H1 (cell line): ENCODE measurements at regions of chr17 and their contacts with region 1.

Region 1: GRCh38 chr17:51000835-51001638 is 119.6 kb downstream of the SPAG9 start:
- DNase-seq: no peak
- H3K4me3 ChIP-seq: no peak overlapping the region
- H3K27ac ChIP-seq: no peak overlapping the region
- H3K4me1 ChIP-seq: no peaks in the 10 kb centered on the region
- H3K27me3 ChIP-seq: no peaks in the 10 kb centered on the region
- CTCF ChIP-seq: peak in 2 of 3 experiments; percentile 39 to 48; a peak in 2 of 4 replicates
- EP300 ChIP-seq: no peak
- POLR2A ChIP-seq: no peak
- RAD21 ChIP-seq: peak; percentile 75 to 78

Region 2: DNA sequence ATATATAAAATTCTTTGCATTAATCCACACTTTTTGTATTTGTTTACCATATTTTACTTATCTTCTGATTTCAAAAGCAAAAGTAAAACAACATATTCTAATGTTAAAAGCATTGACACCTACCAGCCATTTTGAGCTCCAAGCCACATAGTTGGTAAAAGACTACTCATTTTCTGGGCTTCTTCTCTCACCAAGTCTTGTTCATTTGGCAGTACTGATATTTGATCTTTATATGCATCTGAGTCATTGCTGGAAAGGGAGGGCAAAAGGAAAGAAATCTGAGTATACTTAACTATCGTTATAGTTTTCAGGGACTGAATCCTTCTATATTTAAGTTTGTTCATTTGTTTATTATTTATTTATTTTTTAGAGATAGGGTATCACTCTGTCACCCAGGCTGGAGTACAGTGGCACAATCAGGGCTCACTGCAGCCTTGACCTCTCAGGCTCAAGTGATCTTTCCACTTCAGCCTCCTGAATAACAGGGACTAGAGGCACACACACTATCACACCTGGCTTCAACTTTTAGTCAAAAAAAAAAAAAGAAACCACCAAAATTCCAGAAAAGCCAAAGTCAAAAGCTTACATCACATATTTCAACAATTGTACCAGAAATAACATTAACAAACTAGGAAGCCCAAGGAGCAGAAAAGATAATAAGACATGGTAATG is 13.9 kb before region 1 on chr17:
- CTCF ChIA-PET with region 1: interaction called, 16 read pairs
- POLR2A ChIA-PET with region 1: no interaction called
- DNase-seq: no peak
- H3K4me3 ChIP-seq: no peak overlapping the region
- H3K27ac ChIP-seq: no peak overlapping the region
- H3K4me1 ChIP-seq: no peaks in the 10 kb centered on the region
- H3K27me3 ChIP-seq: no peaks in the 10 kb centered on the region
- CTCF ChIP-seq: no peak
- EP300 ChIP-seq: no peak
- POLR2A ChIP-seq: no peak
- RAD21 ChIP-seq: no peak

Region 3: GRCh38 chr17:51015145-51015558 is 14.1 kb after region 1 on chr17:
- CTCF ChIA-PET with region 1: interaction called, 23 read pairs
- POLR2A ChIA-PET with region 1: interaction called, 5 read pairs
- DNase-seq: no peak
- H3K4me3 ChIP-seq: no peak overlapping the region
- H3K27ac ChIP-seq: no peak overlapping the region
- H3K4me1 ChIP-seq: no peaks in the 10 kb centered on the region
- H3K27me3 ChIP-seq: no peaks in the 10 kb centered on the region
- CTCF ChIP-seq: no peak
- EP300 ChIP-seq: no peak
- POLR2A ChIP-seq: no peak
- RAD21 ChIP-seq: no peak

Region 4: GRCh38 chr17:51046514-51047384 is 45.7 kb after region 1 on chr17:
- CTCF ChIA-PET with region 1: interaction called, 147 read pairs
- POLR2A ChIA-PET with region 1: interaction called, 5 read pairs
- DNase-seq: peak; percentile 53 to 75
- H3K4me3 ChIP-seq: peak overlapping the region; percentile 32 to 61 (median 38); a peak in 7 of 8 replicates
- H3K27ac ChIP-seq: peak overlapping the region; percentile 84
- H3K4me1 ChIP-seq: peaks cover 1 to 14% (median 5%) of the 10 kb centered on the region in 4 experiments; a peak in 5 of 7 replicates
- H3K27me3 ChIP-seq: no peaks in the 10 kb centered on the region
- CTCF ChIP-seq: no peak
- EP300 ChIP-seq: no peak
- POLR2A ChIP-seq: peak; percentile 80 to 82
- RAD21 ChIP-seq: no peak

Region 5: DNA sequence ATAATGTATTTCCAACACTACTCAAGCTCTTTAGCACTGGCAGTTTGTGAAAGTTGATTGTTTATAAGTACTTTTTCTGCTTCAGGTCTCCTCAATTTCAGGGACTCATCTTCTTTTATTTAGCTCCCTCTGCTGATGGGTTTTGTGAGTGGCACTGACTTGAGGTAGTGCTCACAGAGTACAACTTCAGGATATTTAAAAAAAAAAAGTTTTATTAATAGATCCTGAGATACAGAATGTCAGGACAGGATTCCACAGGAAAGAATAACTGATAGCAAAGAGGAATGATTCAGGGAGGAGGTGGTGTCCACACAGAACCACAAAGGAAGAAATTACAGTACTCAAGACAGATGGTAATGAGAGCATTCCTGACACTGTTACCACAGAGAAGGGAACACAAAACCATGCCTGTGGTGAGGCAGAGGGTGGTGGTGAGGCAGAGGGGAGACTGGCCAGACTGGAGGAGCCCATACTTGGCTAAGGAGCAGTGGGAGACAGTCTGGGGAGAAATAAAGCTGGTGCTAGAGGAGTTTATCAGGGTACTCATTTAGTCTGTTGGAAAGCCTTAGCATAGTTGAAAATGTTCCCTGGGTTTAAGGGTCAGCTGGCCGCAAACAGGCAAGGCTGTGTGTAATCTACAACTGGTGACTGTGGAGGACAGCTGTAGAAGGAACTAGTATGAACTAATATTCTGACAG is 55.9 kb after region 1 on chr17:
- CTCF ChIA-PET with region 1: interaction called, 147 read pairs
- POLR2A ChIA-PET with region 1: interaction called, 3 read pairs
- DNase-seq: peak in 1 of 2 experiments; percentile 52
- H3K4me3 ChIP-seq: no peak overlapping the region
- H3K27ac ChIP-seq: no peak overlapping the region
- H3K4me1 ChIP-seq: peaks cover 2 to 4% (median 3%) of the 10 kb centered on the region in 4 experiments; a peak in 4 of 7 replicates
- H3K27me3 ChIP-seq: no peaks in the 10 kb centered on the region
- CTCF ChIP-seq: peak in 2 of 3 experiments; percentile 49 to 51; a peak in 2 of 4 replicates
- EP300 ChIP-seq: no peak
- POLR2A ChIP-seq: no peak
- RAD21 ChIP-seq: peak; percentile 55 to 72